CD4-positive, alpha-beta T cell (primary cell): ENCODE measurements at regions of chr7 and their contacts with region 1.

Region 1: DNA sequence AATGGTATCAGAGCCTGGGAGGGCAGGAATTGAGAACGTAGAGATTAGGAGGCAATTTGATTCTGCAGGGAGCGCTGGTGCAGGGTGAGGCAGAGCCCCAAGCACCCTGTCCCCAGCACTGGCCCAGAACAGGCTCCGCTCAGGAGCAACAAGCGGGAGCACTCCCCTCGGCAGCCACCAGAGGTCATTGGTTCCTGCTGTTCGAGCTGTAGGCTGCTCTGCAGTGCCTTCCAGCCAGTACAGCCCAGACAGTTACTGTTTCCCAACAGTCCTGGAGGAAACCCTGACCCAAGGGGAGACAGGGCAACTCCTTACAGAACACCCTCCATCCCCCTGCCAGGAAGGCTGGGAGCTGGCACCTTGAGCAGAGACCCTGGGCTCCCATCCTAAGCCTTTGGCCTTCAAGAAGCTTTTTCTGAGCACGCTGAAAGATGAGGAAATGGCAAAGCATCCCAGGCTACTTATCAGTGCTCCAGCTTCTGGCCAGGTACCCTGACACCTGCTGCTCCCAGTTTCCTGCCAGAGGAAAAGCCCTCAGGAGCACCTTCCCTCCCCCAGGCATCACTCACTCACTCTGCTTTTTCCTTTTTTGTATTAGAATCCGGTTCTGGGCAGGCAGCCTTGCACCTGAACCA is 71.2 kb upstream of the EFCAB10 start:
- DNase-seq: peak; percentile 55 to 74 (median 66)
- ATAC-seq: peak; percentile 94
- H3K4me3 ChIP-seq: no peak overlapping the region
- H3K4me3 Mint-ChIP-seq: no peak overlapping the region
- H3K27ac ChIP-seq: no peak overlapping the region
- H3K27ac Mint-ChIP-seq: no peak overlapping the region
- H3K4me1 ChIP-seq: peaks cover 10% of the 10 kb centered on the region
- H3K4me1 Mint-ChIP-seq: peaks cover 11% of the 10 kb centered on the region
- H3K27me3 ChIP-seq: no peaks in the 10 kb centered on the region
- H3K27me3 Mint-ChIP-seq: no peaks in the 10 kb centered on the region
- CTCF ChIP-seq: peak; percentile 75

Region 2: GRCh38 chr7:105638902-105639495 is 13.5 kb before region 1 on chr7:
- CTCF ChIA-PET with region 1: no interaction called
- POLR2A ChIA-PET with region 1: no interaction called
- intact Hi-C with region 1: no loop called
- DNase-seq: no peak
- ATAC-seq: no peak
- H3K4me3 ChIP-seq: no peak overlapping the region
- H3K4me3 Mint-ChIP-seq: no peak overlapping the region
- H3K27ac ChIP-seq: no peak overlapping the region
- H3K27ac Mint-ChIP-seq: no peak overlapping the region
- H3K4me1 ChIP-seq: no peaks in the 10 kb centered on the region
- H3K4me1 Mint-ChIP-seq: no peaks in the 10 kb centered on the region
- H3K27me3 ChIP-seq: no peaks in the 10 kb centered on the region
- H3K27me3 Mint-ChIP-seq: no peaks in the 10 kb centered on the region
- CTCF ChIP-seq: no peak

Region 3: DNA sequence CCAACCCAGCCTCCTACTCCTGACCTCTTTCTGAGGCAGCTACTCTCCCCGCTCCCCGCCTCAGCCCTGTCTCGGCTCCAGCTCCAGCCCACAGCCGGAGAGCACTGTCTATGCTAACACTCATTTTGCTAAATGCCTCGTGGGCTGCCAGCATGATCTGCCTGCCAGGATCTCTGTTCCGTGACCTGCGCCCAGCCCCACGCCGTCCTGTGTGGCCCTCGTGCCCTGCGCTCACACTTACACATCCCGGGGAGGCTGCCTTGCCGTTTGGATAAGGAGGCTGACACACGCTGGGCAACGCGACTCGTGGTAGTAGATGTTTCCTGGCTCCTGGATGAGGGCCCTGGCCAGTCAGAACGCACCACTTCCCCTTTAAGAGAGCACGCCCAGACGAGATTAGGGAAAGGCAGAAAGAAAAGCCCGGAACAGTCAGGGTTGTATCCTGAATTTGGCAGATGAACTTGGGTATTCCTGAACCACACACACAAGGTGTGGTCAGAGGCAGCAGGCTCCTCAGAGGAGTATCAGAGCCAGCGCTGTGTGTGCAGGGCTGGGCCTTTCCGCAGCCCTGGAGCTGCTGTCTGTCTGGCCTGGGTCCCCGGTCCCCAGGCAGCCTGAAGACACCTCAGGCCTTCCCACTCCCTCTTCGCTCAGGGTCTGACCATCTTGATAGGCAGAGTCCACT is 26.5 kb after region 1 on chr7:
- CTCF ChIA-PET with region 1: interaction called, 9 read pairs
- POLR2A ChIA-PET with region 1: interaction called, 8 read pairs
- intact Hi-C with region 1: loop called in 1 of 2 experiments (anchors 2 kb)
- DNase-seq: peak in 6 of 14 experiments; percentile 12 to 60 (median 50)
- ATAC-seq: peak; percentile 2
- H3K4me3 ChIP-seq: peak overlapping the region; percentile 55
- H3K4me3 Mint-ChIP-seq: peak overlapping the region; percentile 88
- H3K27ac ChIP-seq: peak overlapping the region; percentile 39 to 88
- H3K27ac Mint-ChIP-seq: peak overlapping the region; percentile 98
- H3K4me1 ChIP-seq: peaks cover 66% of the 10 kb centered on the region
- H3K4me1 Mint-ChIP-seq: peaks cover 88% of the 10 kb centered on the region
- H3K27me3 ChIP-seq: no peaks in the 10 kb centered on the region
- H3K27me3 Mint-ChIP-seq: no peaks in the 10 kb centered on the region
- CTCF ChIP-seq: no peak

Region 4: GRCh38 chr7:105707967-105708762 is 55.7 kb after region 1 on chr7:
- CTCF ChIA-PET with region 1: no interaction called
- POLR2A ChIA-PET with region 1: no interaction called
- intact Hi-C with region 1: loop called in 1 of 2 experiments (anchors 5 kb)
- DNase-seq: peak in 4 of 14 experiments; percentile 25 to 42 (median 36)
- ATAC-seq: peak; percentile 78
- H3K4me3 ChIP-seq: no peak overlapping the region
- H3K4me3 Mint-ChIP-seq: peak overlapping the region; percentile 34
- H3K27ac ChIP-seq: no peak overlapping the region
- H3K27ac Mint-ChIP-seq: peak overlapping the region; percentile 63
- H3K4me1 ChIP-seq: peaks cover 13% of the 10 kb centered on the region
- H3K4me1 Mint-ChIP-seq: peaks cover 22% of the 10 kb centered on the region
- H3K27me3 ChIP-seq: no peaks in the 10 kb centered on the region
- H3K27me3 Mint-ChIP-seq: no peaks in the 10 kb centered on the region
- CTCF ChIP-seq: no peak

Region 5: GRCh38 chr7:105759670-105760550 is 107.4 kb after region 1 on chr7:
- CTCF ChIA-PET with region 1: interaction called, 18 read pairs
- POLR2A ChIA-PET with region 1: no interaction called
- intact Hi-C with region 1: loop called (anchors 5 kb)
- DNase-seq: peak in 7 of 14 experiments; percentile 8 to 54 (median 49)
- ATAC-seq: peak; percentile 25
- H3K4me3 ChIP-seq: no peak overlapping the region
- H3K4me3 Mint-ChIP-seq: no peak overlapping the region
- H3K27ac ChIP-seq: no peak overlapping the region
- H3K27ac Mint-ChIP-seq: peak overlapping the region; percentile 45
- H3K4me1 ChIP-seq: peaks cover 45% of the 10 kb centered on the region
- H3K4me1 Mint-ChIP-seq: peaks cover 35% of the 10 kb centered on the region
- H3K27me3 ChIP-seq: no peaks in the 10 kb centered on the region
- H3K27me3 Mint-ChIP-seq: no peaks in the 10 kb centered on the region
- CTCF ChIP-seq: peak; percentile 76

Region 6: GRCh38 chr7:106041140-106041717 is 388.8 kb after region 1 on chr7:
- CTCF ChIA-PET with region 1: interaction called, 18 read pairs
- POLR2A ChIA-PET with region 1: interaction called, 3 read pairs
- intact Hi-C with region 1: loop called (anchors 1 kb)
- DNase-seq: peak in 5 of 14 experiments; percentile 23 to 61 (median 50)
- ATAC-seq: peak; percentile 22
- H3K4me3 ChIP-seq: no peak overlapping the region
- H3K4me3 Mint-ChIP-seq: no peak overlapping the region
- H3K27ac ChIP-seq: no peak overlapping the region
- H3K27ac Mint-ChIP-seq: peak overlapping the region; percentile 67
- H3K4me1 ChIP-seq: peaks cover 29% of the 10 kb centered on the region
- H3K4me1 Mint-ChIP-seq: peaks cover 50% of the 10 kb centered on the region
- H3K27me3 ChIP-seq: peaks cover 0 to 4% of the 10 kb centered on the region in 2 experiments
- H3K27me3 Mint-ChIP-seq: peaks cover 4% of the 10 kb centered on the region
- CTCF ChIP-seq: peak; percentile 57